Transverse colon (tissue), 4 donors: ENCODE measurements at regions of chr10 and their contacts with region 1.

Region 1: GRCh38 chr10:123464430-123465323 is 201.5 kb upstream of the GPR26 start:
- DNase-seq: no peak
- H3K4me3 ChIP-seq: no peak overlapping the region
- H3K27ac ChIP-seq: no peak overlapping the region
- H3K4me1 ChIP-seq: no peaks in the 10 kb centered on the region
- H3K27me3 ChIP-seq: no peaks in the 10 kb centered on the region
- CTCF ChIP-seq: no peak
- EP300 ChIP-seq: no peak
- POLR2A ChIP-seq: no peak

Region 2: GRCh38 chr10:123607386-123607785 is 142.7 kb after region 1 on chr10:
- in situ Hi-C with region 1: no loop called
- intact Hi-C with region 1: no loop called
- DNase-seq: no peak
- H3K4me3 ChIP-seq: no peak overlapping the region
- H3K27ac ChIP-seq: no peak overlapping the region
- H3K4me1 ChIP-seq: no peaks in the 10 kb centered on the region
- H3K27me3 ChIP-seq: peaks cover 7% of the 10 kb centered on the region
- CTCF ChIP-seq: no peak
- EP300 ChIP-seq: no peak
- POLR2A ChIP-seq: no peak

Region 3: GRCh38 chr10:123835575-123835974 is 370.9 kb after region 1 on chr10:
- in situ Hi-C with region 1: no loop called
- intact Hi-C with region 1: loop called (anchors 5 kb)
- DNase-seq: no peak
- H3K4me3 ChIP-seq: no peak overlapping the region
- H3K27ac ChIP-seq: peak overlapping the region in 3 of 4 donors; percentile 37 to 70 (median 46)
- H3K4me1 ChIP-seq: peaks cover 0 to 10% (median 3%) of the 10 kb centered on the region in 4 donors
- H3K27me3 ChIP-seq: no peaks in the 10 kb centered on the region
- CTCF ChIP-seq: no peak
- EP300 ChIP-seq: no peak
- POLR2A ChIP-seq: no peak